Lower leg skin (tissue), 4 donors: ENCODE measurements at regions of chr2 and their contacts with region 1.

Region 1: GRCh38 chr2:5026552-5027234 is 665.5 kb upstream of the SOX11 start:
- DNase-seq: no peak
- H3K4me3 ChIP-seq: no peak overlapping the region
- CTCF ChIP-seq: no peak
- POLR2A ChIP-seq: no peak

Region 2: GRCh38 chr2:4780679-4781078 is 246.0 kb before region 1 on chr2:
- intact Hi-C with region 1: no loop called
- DNase-seq: no peak
- H3K4me3 ChIP-seq: no peak overlapping the region
- CTCF ChIP-seq: no peak
- POLR2A ChIP-seq: no peak

Region 3: GRCh38 chr2:6148882-6149281 is 1122.2 kb after region 1 on chr2:
- intact Hi-C with region 1: loop called (anchors 5 kb)
- DNase-seq: no peak
- H3K4me3 ChIP-seq: no peak overlapping the region
- CTCF ChIP-seq: no peak
- POLR2A ChIP-seq: no peak